Activated CD4-positive, alpha-beta T cell treated with anti-CD3 and anti-CD28 coated beads, Interleukin-2, amount 10 ng/mL, durations not matched to agents 24 days and 14 days (primary cell): ENCODE measurements at regions of chr2 and their contacts with region 1.

Region 1: DNA sequence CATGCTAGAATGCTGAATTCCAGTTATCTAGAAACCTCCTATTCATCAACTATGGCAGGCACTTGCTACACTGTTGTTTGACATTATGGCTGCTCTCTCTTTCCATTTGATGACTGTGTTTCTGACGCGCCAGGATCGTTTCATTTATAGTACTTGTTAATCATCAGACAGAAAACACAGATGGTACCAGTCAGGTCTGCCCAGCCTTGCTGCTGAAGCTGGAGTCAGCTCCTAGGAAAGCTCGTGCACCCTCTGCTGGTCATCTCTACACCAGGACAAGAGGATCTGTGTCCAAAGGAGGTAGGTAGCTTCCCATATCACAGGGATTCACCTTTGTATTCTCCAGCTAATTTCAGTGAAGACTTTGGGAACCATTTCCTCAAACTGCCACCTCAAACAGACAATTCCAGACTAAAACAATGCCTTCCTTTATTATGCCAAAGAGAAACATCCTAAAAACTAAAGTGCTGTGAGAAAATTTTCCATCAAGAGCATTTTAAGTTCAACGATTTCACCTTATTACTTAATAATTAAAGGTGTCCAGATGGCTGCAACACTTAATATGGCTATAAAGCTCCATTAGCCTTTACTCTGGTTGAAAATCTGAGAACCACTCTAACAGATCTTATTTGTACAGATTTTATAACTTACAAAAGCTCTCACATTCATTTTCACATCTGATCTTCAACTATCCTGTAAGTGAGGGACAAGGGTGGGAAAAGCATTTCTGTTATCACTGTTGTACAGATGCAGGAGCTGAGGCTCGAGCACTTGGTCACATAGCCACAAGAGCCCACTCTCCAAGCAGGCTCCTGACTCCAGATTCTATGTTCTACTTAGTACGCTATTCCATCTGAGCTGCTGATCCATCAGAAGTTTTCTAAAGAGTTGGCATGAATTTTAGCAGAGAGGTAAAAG is 17.5 kb downstream of the METTL8 start:
- DNase-seq: peak; percentile 93
- H3K4me3 Mint-ChIP-seq: no peak overlapping the region
- H3K27ac Mint-ChIP-seq: peak overlapping the region; percentile 80
- H3K4me1 Mint-ChIP-seq: peaks cover 23% of the 10 kb centered on the region
- H3K27me3 Mint-ChIP-seq: no peaks in the 10 kb centered on the region

Region 2: GRCh38 chr2:171244970-171245782 is 171.1 kb before region 1 on chr2:
- intact Hi-C with region 1: loop called (anchors 5 kb)
- DNase-seq: no peak
- H3K4me3 Mint-ChIP-seq: no peak overlapping the region
- H3K27ac Mint-ChIP-seq: no peak overlapping the region
- H3K4me1 Mint-ChIP-seq: peaks cover 43% of the 10 kb centered on the region
- H3K27me3 Mint-ChIP-seq: no peaks in the 10 kb centered on the region

Region 3: GRCh38 chr2:171325886-171326585 is 90.2 kb before region 1 on chr2:
- intact Hi-C with region 1: loop called (anchors 1 kb)
- DNase-seq: no peak
- H3K4me3 Mint-ChIP-seq: peak overlapping the region; percentile 61
- H3K27ac Mint-ChIP-seq: peak overlapping the region; percentile 79
- H3K4me1 Mint-ChIP-seq: peaks cover 37% of the 10 kb centered on the region
- H3K27me3 Mint-ChIP-seq: no peaks in the 10 kb centered on the region

Region 4: GRCh38 chr2:171433763-171434670 is 17.7 kb after region 1 on chr2 and contains the starts of genes DCAF17 and METTL8:
- intact Hi-C with region 1: loop called (anchors 2 kb)
- DNase-seq: peak; percentile 98
- H3K4me3 Mint-ChIP-seq: peak within 1 kb of the TSS; percentile 82
- H3K27ac Mint-ChIP-seq: peak within 1 kb of the TSS; percentile 88
- H3K4me1 Mint-ChIP-seq: peaks cover 23% of the 10 kb centered on the region
- H3K27me3 Mint-ChIP-seq: no peaks in the 10 kb centered on the region
- total RNA-seq, gene DCAF17: 27.3 and 27.4 TPM in 2 replicates
- total RNA-seq, gene METTL8: 33.1 and 42.9 TPM in 2 replicates